ENCODE measurements at regions of chr2 and their contacts with region 1.

Region 1: DNA sequence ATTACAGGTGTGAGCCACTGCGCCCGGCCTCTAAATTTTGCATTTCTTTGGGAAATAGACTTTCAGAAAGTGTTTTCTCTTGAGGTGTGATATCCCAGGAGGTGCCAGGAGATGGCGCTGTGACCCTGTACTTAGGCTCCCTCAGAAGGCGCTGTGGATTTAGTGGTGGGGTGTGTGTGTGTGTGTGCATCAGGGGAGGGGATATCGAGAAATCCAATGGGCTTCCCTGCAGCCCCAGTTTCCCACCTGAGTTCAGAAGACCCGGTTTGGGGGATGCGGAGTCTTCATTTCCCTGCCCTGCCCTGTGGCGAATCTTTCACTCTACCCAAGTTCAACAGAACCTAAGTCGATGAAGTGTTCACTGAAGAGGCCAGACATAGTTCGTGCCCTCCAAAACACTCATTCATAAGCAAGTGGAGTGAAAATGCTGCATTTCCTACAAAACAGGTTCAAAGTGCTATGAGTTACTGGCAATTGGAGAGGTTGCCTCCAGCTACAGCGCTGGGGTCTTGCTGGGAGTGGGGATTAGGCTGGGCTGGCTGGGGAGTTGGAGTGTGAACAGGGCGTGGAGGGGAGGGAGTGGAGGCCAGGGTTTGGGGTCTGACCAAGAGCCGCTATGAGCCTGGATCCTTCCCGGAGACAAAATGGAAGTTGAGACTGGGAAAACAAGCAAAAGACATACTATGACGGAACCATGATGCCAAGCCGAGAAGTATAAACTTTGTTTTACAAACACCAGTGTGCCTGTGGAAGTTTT is 6.5 kb upstream of the WNT6 start:
- DNase-seq: peak; percentile 85
- ATAC-seq: peak; percentile 85
- H3K4me3 Mint-ChIP-seq: no peak overlapping the region
- H3K27ac Mint-ChIP-seq: no peak overlapping the region
- H3K4me1 Mint-ChIP-seq: no peaks in the 10 kb centered on the region
- H3K27me3 Mint-ChIP-seq: peaks cover 61% of the 10 kb centered on the region
- CTCF ChIP-seq: peak; percentile 89

Region 2: DNA sequence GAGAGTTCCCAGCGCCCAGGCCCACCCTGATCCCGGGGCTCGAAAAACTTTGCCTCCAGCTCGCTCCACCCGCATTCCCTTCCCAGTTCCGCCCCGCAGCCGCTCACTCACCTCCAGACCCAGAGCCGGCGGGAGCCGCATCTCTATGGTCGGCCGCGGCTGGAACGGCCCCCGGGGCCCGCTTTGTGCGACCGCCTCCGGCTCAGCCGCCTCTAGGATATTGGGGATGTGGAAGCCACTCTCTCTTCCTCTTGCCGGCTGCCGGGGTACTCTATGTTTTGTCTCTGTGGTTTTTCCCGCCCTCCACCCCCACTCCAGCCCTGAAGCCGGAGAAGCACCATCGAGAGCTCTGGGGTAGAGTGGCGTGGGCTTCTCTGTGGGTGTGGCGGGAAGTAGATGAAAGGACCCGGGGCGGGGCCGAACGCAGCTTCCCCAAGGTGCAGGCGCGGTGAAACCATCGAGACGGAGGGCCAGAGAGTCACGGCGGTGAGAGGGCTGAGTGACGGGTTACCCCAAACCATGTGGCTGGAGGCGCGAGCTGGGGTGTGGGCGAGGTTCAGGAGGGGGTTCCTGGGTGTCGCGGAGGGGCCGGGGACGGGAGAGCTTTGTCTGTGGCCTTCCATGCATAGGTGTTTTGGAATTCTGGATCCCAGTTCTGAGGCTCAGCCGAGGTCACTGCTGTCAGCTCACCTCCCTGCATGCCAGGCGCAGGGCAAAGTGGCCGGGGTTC is 193.7 kb before region 1 on chr2 and contains the starts of genes BCS1L and ZNF142:
- CTCF ChIA-PET with region 1: interaction called, 24 read pairs
- POLR2A ChIA-PET with region 1: no interaction called
- intact Hi-C with region 1: no loop called
- DNase-seq: peak; percentile 99
- ATAC-seq: peak; percentile 97
- H3K4me3 Mint-ChIP-seq: peak within 1 kb of the TSS; percentile 92
- H3K27ac Mint-ChIP-seq: peak within 1 kb of the TSS; percentile 92
- H3K4me1 Mint-ChIP-seq: peaks cover 29% of the 10 kb centered on the region
- H3K27me3 Mint-ChIP-seq: no peaks in the 10 kb centered on the region
- CTCF ChIP-seq: no peak
- total RNA-seq, gene BCS1L: 69.6 to 76.3 TPM
- total RNA-seq, gene ZNF142: 30.4 to 33.7 TPM

Region 3: DNA sequence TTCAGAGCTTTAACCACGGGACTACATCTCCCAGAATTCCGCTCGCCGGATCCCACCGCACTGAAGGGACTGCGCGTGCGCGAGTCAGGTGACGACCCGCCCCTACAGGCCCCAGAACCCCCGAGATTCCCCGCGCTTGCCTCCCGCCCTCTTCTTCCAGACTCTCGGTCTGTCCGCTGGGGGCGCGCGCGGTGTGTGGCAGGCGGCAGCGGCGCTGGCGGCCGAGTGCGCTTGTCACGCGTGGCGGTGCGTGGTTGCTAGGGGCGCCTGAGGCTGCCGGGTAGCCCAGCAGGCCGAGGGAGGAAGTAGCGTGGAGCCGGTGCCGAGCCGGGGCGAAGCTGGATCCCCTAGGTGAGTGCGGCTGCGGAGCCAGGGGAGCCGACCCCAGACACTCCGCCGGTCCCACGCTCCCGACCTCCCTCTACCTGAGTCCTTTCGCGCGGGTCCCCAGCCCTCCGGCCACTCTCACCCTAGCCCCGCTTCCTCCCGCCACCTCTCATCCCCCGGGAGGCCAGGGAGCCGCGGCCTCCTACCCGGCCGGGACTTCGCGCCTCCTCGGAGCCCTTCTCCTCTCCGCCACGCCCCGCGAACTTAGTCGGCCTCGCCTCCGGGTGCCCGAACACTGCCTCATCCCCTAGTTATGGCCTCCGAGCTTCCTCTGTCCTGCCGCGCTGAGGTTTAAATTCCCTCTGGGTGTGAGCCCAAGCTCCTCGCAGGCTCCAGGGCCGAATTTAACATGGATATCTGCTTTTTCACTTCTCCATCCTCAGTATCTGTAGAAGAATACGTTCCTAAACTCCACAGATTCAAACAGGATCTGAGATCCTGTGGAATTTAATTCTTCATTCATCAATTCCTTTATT is 142.2 kb before region 1 on chr2 and contains the start of gene TTLL4:
- CTCF ChIA-PET with region 1: interaction called, 11 read pairs
- POLR2A ChIA-PET with region 1: no interaction called
- intact Hi-C with region 1: no loop called
- DNase-seq: peak; percentile 98
- ATAC-seq: peak; percentile 98
- H3K4me3 Mint-ChIP-seq: peak within 1 kb of the TSS; percentile 86
- H3K27ac Mint-ChIP-seq: peak within 1 kb of the TSS; percentile 77
- H3K4me1 Mint-ChIP-seq: peaks cover 17% of the 10 kb centered on the region
- H3K27me3 Mint-ChIP-seq: peaks cover 1% of the 10 kb centered on the region
- CTCF ChIP-seq: peak; percentile 87
- total RNA-seq, gene TTLL4: 32.2 to 36.6 TPM

Region 4: GRCh38 chr2:218733171-218734021 is 119.7 kb before region 1 on chr2:
- CTCF ChIA-PET with region 1: interaction called, 74 read pairs
- POLR2A ChIA-PET with region 1: no interaction called
- intact Hi-C with region 1: loop called (anchors 5 kb)
- DNase-seq: peak; percentile 52
- ATAC-seq: peak; percentile 99
- H3K4me3 Mint-ChIP-seq: no peak overlapping the region
- H3K27ac Mint-ChIP-seq: peak overlapping the region; percentile 23
- H3K4me1 Mint-ChIP-seq: peaks cover 21% of the 10 kb centered on the region
- H3K27me3 Mint-ChIP-seq: no peaks in the 10 kb centered on the region
- CTCF ChIP-seq: no peak

Region 5: DNA sequence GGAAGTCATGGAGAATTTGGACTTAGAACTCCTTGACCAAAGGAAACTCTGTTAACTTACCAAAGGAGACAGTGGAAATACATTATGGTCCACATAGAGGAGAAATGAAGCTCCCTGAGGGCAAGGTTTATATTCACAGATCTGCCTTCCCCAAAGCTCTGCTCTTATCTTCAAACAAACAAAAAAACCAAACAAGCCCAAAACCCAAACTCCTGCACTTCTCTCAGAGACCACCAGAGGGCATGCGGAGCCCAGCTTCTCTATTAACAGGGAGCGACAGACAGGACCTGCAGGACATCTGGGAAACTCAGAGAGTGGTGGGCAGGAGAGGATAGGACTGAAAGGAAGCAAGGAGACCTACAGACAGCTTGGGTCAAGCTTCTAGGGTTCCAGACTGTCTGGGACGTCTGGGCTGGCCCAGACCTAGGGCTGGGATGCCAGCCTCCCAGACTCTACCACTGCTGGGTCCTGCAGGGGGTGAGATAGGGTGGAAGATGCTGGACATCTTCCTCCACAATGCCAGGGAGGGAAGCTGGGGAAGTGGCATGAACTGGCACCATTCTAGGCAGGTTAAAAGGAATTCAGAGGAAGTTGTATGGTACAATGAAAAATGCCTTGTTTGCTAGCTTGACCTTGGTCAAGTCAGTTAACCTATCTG is 23.6 kb after region 1 on chr2:
- CTCF ChIA-PET with region 1: interaction called, 52 read pairs
- POLR2A ChIA-PET with region 1: no interaction called
- intact Hi-C with region 1: no loop called
- DNase-seq: peak; percentile 84
- ATAC-seq: no peak
- H3K4me3 Mint-ChIP-seq: no peak overlapping the region
- H3K27ac Mint-ChIP-seq: no peak overlapping the region
- H3K4me1 Mint-ChIP-seq: peaks cover 51% of the 10 kb centered on the region
- H3K27me3 Mint-ChIP-seq: peaks cover 42% of the 10 kb centered on the region
- CTCF ChIP-seq: peak; percentile 98